GM12878 (cell line): ENCODE measurements at regions of chr1 and their contacts with region 1.

Region 1: DNA sequence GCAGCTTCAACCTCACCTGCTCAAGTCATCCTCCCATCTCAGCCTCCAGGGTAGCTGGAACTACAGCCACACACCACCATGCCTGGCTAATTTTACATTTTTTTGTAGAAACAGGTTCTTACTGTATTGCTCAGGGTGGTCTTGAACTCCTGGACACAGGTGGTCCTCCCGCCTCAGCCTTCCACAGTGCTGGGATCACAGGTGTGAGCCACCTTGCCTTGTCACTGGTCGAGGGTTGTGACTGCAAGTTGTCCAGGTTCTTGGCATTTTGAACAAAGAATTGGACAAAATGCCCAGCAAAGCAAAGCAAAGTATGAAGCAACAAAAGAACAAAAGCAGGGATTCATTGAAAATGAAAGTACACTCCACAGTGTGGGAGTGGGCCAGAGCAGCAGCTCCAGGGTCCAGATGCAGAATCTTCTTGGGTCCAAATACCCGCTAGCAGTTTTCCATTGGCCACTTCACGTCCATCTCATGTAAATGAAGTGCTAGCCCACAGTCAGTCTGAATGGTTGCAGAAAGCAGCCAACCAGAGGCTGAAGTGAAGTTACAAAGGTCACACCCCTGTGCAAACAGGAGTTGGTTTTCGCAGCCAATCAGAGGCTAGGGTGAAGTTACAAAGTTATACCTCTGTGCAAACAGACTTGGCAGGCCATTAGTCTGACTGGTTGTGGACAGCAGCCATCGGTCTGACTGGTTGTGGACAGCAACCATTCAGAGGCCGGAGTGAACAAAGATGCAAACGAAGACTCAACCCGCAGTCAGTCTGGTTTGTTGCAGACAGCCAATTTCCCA is 109.5 kb upstream of the KIF26B start:
- DNase-seq: no peak
- ATAC-seq: peak; percentile 21; the same call in 2 of the 3 replicates
- H3K4me3 ChIP-seq: no peak overlapping the region
- H3K27ac ChIP-seq: no peak overlapping the region
- H3K4me1 ChIP-seq: no peaks in the 10 kb centered on the region
- H3K27me3 ChIP-seq: peaks cover 0 to 1% of the 10 kb centered on the region in 2 experiments; a peak in 1 of 4 replicates
- CTCF ChIP-seq: no peak
- EP300 ChIP-seq: no peak
- POLR2A ChIP-seq: no peak
- RAD21 ChIP-seq: no peak

Region 2: DNA sequence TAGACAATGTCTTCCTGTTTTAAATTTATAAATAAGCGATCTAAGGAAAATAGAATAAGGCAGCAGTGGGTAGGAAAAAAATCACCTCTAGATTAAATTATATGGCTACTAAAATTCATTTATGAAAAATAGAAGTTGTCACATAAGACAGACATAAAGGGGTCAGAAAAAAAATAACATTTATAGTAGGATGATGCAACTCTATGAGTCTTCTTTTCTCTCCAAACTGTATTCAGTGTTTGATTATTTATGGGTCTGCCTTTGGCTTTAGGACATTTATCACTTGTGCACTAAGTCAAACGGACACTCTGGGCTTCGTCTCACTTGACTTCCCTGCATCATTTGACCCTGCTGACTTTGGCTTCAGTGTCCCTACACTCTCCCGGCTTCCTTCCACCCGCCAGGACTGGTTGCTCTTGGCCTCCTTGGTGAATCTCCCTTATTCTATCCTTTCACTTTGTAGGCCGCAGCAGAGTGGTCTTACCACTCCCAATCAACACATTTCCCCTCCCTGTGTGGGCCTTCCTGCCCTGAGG is 439.4 kb before region 1 on chr1:
- CTCF ChIA-PET with region 1: interaction called, 78 read pairs
- POLR2A ChIA-PET with region 1: no interaction called
- RAD21 ChIA-PET with region 1: interaction called, 37 read pairs
- SMC1A ChIA-PET with region 1: interaction called, 40 read pairs
- in situ Hi-C with region 1: loop called (anchors 5 kb)
- intact Hi-C with region 1: loop called (anchors 2 kb)
- DNase-seq: no peak
- ATAC-seq: no peak
- H3K4me3 ChIP-seq: no peak overlapping the region
- H3K27ac ChIP-seq: no peak overlapping the region
- H3K4me1 ChIP-seq: no peaks in the 10 kb centered on the region
- H3K27me3 ChIP-seq: no peaks in the 10 kb centered on the region
- CTCF ChIP-seq: no peak
- EP300 ChIP-seq: no peak
- POLR2A ChIP-seq: no peak
- RAD21 ChIP-seq: no peak

Region 3: GRCh38 chr1:244815600-244816099 is 229.6 kb before region 1 on chr1:
- CTCF ChIA-PET with region 1: interaction called, 18 read pairs
- POLR2A ChIA-PET with region 1: no interaction called
- RAD21 ChIA-PET with region 1: interaction called, 15 read pairs
- SMC1A ChIA-PET with region 1: interaction called, 22 read pairs
- in situ Hi-C with region 1: no loop called
- intact Hi-C with region 1: no loop called
- DNase-seq: peak; percentile 30
- ATAC-seq: peak; percentile 70
- H3K4me3 ChIP-seq: peak overlapping the region; percentile 46; the same call in 1 of the 2 replicates
- H3K27ac ChIP-seq: peak overlapping the region; percentile 24; the same call in 1 of the 2 replicates
- H3K4me1 ChIP-seq: peaks cover 5% of the 10 kb centered on the region
- H3K27me3 ChIP-seq: no peaks in the 10 kb centered on the region
- CTCF ChIP-seq: no peak
- EP300 ChIP-seq: peak in 1 of 2 experiments; percentile 9; a peak in 1 of 4 replicates
- POLR2A ChIP-seq: no peak
- RAD21 ChIP-seq: no peak

Region 4: DNA sequence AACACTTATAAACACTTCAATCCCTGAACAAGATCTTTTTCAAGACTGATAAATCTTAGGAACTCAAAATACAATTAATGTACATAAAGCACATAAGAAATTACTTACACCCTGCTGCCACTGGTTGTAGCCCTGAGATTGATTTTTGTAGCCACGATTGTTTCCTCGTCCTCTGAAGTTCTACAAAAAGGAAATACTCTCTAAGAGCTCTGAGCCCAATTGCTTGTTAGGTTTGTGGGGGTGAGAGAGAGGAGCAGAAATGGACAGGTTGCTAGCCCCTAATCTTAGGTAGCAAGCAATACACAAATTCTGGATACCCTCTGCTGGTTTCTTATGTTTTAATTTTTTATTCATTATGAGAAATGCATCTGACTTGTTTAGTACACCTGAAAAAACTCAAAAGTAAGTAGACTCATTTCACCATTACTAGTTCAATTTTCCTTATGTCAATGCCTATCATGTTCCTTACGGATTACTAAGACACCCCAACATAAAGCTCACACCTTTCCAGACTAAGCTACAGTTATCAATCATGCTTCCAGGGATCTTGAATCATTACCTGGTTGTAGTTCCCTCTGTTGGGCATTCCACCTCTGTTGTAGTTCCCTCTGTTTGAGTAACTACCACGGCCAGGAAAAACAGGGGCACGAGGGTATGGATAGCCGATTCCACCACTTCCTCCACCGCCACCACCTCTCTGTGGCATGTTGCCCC is 190.3 kb before region 1 on chr1:
- CTCF ChIA-PET with region 1: interaction called, 11 read pairs
- POLR2A ChIA-PET with region 1: interaction called, 3 read pairs
- RAD21 ChIA-PET with region 1: interaction called, 13 read pairs
- SMC1A ChIA-PET with region 1: interaction called, 18 read pairs
- in situ Hi-C with region 1: no loop called
- intact Hi-C with region 1: no loop called
- DNase-seq: no peak
- ATAC-seq: peak; percentile 6
- H3K4me3 ChIP-seq: no peak overlapping the region
- H3K27ac ChIP-seq: no peak overlapping the region
- H3K4me1 ChIP-seq: no peaks in the 10 kb centered on the region
- H3K27me3 ChIP-seq: no peaks in the 10 kb centered on the region
- CTCF ChIP-seq: no peak
- EP300 ChIP-seq: no peak
- POLR2A ChIP-seq: no peak
- RAD21 ChIP-seq: no peak

Region 5: DNA sequence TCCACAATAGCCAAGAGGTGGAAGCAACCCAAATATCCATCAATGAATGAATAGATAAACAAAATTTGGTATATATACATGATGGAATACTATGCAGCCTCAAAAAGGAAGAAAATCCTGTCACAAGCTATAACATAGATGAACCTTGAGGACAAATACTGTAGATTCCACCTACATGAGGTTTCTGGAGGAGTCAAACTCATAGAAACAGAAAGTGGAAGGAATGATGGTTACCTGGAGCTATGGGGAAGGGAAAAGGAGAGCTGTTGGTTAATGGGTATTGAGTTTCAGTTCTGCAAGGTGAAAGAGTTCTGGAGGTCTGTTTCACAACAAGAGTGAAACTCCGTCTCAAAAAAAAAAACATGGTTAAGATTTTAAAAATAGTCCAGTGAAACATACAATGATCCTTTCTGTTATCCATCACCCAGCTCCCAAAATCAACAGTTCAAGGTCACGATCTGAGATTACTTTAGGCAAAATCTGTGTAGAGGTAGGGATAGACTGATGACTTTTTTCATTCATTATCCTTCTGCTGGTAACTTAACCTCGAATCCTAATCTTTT is 100.1 kb before region 1 on chr1:
- CTCF ChIA-PET with region 1: interaction called, 10 read pairs
- POLR2A ChIA-PET with region 1: no interaction called
- RAD21 ChIA-PET with region 1: interaction called, 9 read pairs
- SMC1A ChIA-PET with region 1: interaction called, 18 read pairs
- in situ Hi-C with region 1: no loop called
- intact Hi-C with region 1: no loop called
- DNase-seq: peak; percentile 85
- ATAC-seq: peak; percentile 74
- H3K4me3 ChIP-seq: peak overlapping the region; percentile 33
- H3K27ac ChIP-seq: peak overlapping the region; percentile 88
- H3K4me1 ChIP-seq: peaks cover 25% of the 10 kb centered on the region
- H3K27me3 ChIP-seq: no peaks in the 10 kb centered on the region
- CTCF ChIP-seq: no peak
- EP300 ChIP-seq: peak; percentile 54 to 73; a peak in 3 of 4 replicates
- POLR2A ChIP-seq: no peak
- RAD21 ChIP-seq: no peak

Region 6: GRCh38 chr1:245008761-245009160 is 36.5 kb before region 1 on chr1:
- CTCF ChIA-PET with region 1: interaction called, 6 read pairs
- POLR2A ChIA-PET with region 1: no interaction called
- RAD21 ChIA-PET with region 1: interaction called, 3 read pairs
- SMC1A ChIA-PET with region 1: interaction called, 10 read pairs
- in situ Hi-C with region 1: no loop called
- intact Hi-C with region 1: no loop called
- DNase-seq: no peak
- ATAC-seq: no peak
- H3K4me3 ChIP-seq: no peak overlapping the region
- H3K27ac ChIP-seq: no peak overlapping the region
- H3K4me1 ChIP-seq: no peaks in the 10 kb centered on the region
- H3K27me3 ChIP-seq: no peaks in the 10 kb centered on the region
- CTCF ChIP-seq: no peak
- EP300 ChIP-seq: no peak
- POLR2A ChIP-seq: no peak
- RAD21 ChIP-seq: no peak

Region 7: GRCh38 chr1:245142171-245142798 is 97.0 kb after region 1 on chr1:
- CTCF ChIA-PET with region 1: no interaction called
- POLR2A ChIA-PET with region 1: no interaction called
- RAD21 ChIA-PET with region 1: no interaction called
- SMC1A ChIA-PET with region 1: no interaction called
- in situ Hi-C with region 1: no loop called
- intact Hi-C with region 1: no loop called
- DNase-seq: no peak
- ATAC-seq: no peak
- H3K4me3 ChIP-seq: no peak overlapping the region
- H3K27ac ChIP-seq: no peak overlapping the region
- H3K4me1 ChIP-seq: no peaks in the 10 kb centered on the region
- H3K27me3 ChIP-seq: no peaks in the 10 kb centered on the region; a peak in 1 of 4 replicates
- CTCF ChIP-seq: no peak
- EP300 ChIP-seq: no peak
- POLR2A ChIP-seq: no peak
- RAD21 ChIP-seq: no peak